Right cardiac atrium (tissue), 5 donors: ENCODE measurements at regions of chr13 and their contacts with region 1.

Region 1: DNA sequence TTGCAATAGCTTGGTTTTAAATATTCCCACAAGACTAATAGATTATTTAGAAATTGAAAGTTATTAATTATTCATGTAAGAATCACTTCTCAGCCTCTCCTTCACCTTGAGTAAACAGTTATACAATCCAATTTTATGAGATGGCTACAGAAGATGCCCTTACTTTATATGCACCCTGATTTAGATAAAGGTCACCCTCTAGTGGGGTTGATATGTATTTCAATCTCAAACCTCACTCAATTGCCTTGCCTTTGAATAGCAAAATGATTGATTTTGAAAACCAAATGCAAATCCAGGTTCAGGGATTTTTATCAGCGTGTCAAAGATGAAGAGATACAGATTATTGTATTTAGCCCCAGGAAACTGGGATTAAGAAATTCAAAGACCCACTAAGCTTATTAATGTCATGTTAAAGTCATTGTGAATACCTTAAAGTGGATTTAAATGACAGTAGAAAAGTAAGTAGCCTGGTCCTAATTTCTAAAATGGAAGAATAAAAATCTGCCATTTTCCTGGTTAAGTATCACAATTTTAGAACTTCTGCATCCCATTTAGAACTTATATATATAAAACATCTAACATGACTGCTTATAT is 305.1 kb downstream of the ITGBL1 start:
- DNase-seq: no peak
- ATAC-seq: peak in 1 of 2 donors; percentile 75
- H3K4me3 ChIP-seq: no peak overlapping the region
- H3K27ac ChIP-seq: no peak overlapping the region
- H3K4me1 ChIP-seq: no peaks in the 10 kb centered on the region
- H3K27me3 ChIP-seq: no peaks in the 10 kb centered on the region

Region 2: DNA sequence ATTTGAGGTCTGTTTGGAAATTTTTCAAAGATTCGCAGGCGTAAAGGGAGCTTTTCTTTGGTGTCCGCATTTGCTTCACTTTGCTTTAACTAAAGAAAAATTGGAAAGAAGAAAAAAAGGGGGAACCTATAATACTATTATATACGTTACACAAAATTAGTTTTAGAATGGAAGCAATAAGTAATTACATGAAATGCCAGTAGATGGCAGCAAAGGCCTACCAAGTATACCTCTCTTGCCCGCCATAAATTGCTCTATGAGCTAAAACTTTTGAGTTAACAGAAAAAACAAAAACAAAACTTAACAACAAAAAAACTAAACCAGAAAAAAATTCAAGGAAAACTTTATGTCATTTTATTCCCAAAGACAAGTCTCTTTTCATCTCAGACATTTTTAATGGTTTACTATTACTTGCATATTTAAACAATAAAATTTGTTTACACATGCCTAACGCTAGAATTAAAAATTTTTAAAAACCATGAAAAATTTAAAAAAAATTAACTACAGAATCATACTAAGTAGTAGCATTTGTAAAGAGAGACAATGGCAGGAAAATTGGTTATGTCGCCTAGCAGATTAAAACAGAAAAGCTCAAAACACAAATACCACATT is 612.6 kb before region 1 on chr13:
- intact Hi-C with region 1: loop called in 2 of 4 experiments (anchors 10 kb)
- DNase-seq: no peak
- ATAC-seq: no peak
- H3K4me3 ChIP-seq: no peak overlapping the region
- H3K27ac ChIP-seq: no peak overlapping the region
- H3K4me1 ChIP-seq: no peaks in the 10 kb centered on the region
- H3K27me3 ChIP-seq: no peaks in the 10 kb centered on the region

Region 3: GRCh38 chr13:101502618-101503017 is 254.9 kb before region 1 on chr13:
- intact Hi-C with region 1: loop called in 1 of 4 experiments (anchors 10 kb)
- DNase-seq: no peak
- ATAC-seq: no peak
- H3K4me3 ChIP-seq: no peak overlapping the region
- H3K27ac ChIP-seq: no peak overlapping the region
- H3K4me1 ChIP-seq: peaks cover 2% of the 10 kb centered on the region
- H3K27me3 ChIP-seq: no peaks in the 10 kb centered on the region

Region 4: DNA sequence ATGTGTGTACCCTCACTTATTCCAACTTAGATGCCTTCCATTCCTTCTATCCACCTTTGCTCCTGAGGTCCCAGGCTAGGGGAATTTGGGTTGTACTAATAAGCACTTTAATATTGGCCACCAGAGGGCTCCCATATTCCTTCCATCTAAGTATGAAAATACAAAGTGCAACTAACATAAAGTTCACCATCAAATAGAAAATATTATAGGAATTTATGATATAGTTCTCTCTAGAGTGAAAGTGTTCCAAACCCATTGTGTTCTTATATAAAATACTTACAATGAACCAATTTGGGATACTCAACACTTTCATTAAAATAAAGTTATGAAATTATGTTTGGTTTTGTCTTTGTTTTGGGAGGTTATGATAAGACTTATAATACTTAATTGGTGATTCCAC is 242.8 kb before region 1 on chr13:
- intact Hi-C with region 1: loop called in 3 of 4 experiments (anchors 2 to 10 kb)
- DNase-seq: no peak
- ATAC-seq: no peak
- H3K4me3 ChIP-seq: no peak overlapping the region
- H3K27ac ChIP-seq: no peak overlapping the region
- H3K4me1 ChIP-seq: no peaks in the 10 kb centered on the region
- H3K27me3 ChIP-seq: no peaks in the 10 kb centered on the region

Region 5: GRCh38 chr13:101520672-101521071 is 236.9 kb before region 1 on chr13:
- intact Hi-C with region 1: loop called in 3 of 4 experiments (anchors 2 to 10 kb)
- DNase-seq: no peak
- ATAC-seq: no peak
- H3K4me3 ChIP-seq: no peak overlapping the region
- H3K27ac ChIP-seq: no peak overlapping the region
- H3K4me1 ChIP-seq: no peaks in the 10 kb centered on the region
- H3K27me3 ChIP-seq: no peaks in the 10 kb centered on the region